ENCODE measurements at regions of chr12 and their contacts with region 1.

Region 1: GRCh38 chr12:86484473-86484872 is 228.3 kb upstream of the MGAT4C start:
- DNase-seq: no peak
- H3K4me3 Mint-ChIP-seq: no peak overlapping the region
- H3K27ac Mint-ChIP-seq: no peak overlapping the region
- H3K4me1 Mint-ChIP-seq: no peaks in the 10 kb centered on the region
- H3K27me3 Mint-ChIP-seq: no peaks in the 10 kb centered on the region
- CTCF ChIP-seq: no peak

Region 2: GRCh38 chr12:85781766-85782165 is 702.7 kb before region 1 on chr12:
- CTCF ChIA-PET with region 1: no interaction called
- POLR2A ChIA-PET with region 1: no interaction called
- intact Hi-C with region 1: no loop called
- DNase-seq: no peak
- H3K4me3 Mint-ChIP-seq: no peak overlapping the region
- H3K27ac Mint-ChIP-seq: no peak overlapping the region
- H3K4me1 Mint-ChIP-seq: peaks cover 13% of the 10 kb centered on the region
- H3K27me3 Mint-ChIP-seq: no peaks in the 10 kb centered on the region
- CTCF ChIP-seq: no peak

Region 3: DNA sequence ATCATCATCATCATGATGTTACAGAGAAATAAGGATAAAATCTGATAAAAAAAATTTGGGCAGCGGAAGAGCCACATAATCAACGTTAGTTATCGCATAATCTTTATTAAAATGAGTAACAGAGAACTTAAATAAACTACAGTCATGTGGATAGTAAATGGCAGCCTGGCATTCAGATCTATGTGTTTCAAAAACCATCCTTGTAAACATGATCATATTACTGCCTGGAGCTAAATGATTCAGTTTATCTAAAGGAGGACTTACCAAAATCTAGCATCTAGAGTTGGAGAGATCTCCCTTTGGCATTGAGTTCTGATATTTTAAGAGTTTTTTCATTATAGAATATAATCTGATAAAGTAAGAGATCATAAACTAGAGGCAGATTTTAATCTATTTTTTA is 28.2 kb before region 1 on chr12:
- CTCF ChIA-PET with region 1: no interaction called
- POLR2A ChIA-PET with region 1: no interaction called
- intact Hi-C with region 1: no loop called
- DNase-seq: peak; percentile 8
- H3K4me3 Mint-ChIP-seq: no peak overlapping the region
- H3K27ac Mint-ChIP-seq: no peak overlapping the region
- H3K4me1 Mint-ChIP-seq: no peaks in the 10 kb centered on the region
- H3K27me3 Mint-ChIP-seq: no peaks in the 10 kb centered on the region
- CTCF ChIP-seq: no peak

Region 4: DNA sequence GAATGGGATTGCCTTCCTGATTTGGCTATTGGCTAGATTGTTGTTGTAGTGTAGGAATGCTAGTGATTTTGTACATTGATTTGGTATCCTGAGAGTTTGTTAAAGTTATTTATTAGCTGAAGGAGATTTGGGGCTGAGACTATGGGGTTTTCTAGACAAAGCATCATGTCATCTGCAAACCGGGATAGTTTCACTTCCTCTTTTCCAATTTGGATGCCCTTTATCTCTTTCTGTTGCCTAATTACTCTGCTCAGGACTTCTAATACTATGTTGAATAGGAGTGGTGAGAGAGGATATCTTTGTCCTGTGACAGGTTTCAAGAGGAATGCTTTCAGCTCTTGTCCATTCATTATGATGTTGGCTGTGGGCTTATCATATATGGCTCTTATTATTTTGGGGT is 37.4 kb after region 1 on chr12:
- CTCF ChIA-PET with region 1: no interaction called
- POLR2A ChIA-PET with region 1: no interaction called
- intact Hi-C with region 1: loop called (anchors 1 kb)
- DNase-seq: no peak
- H3K4me3 Mint-ChIP-seq: no peak overlapping the region
- H3K27ac Mint-ChIP-seq: no peak overlapping the region
- H3K4me1 Mint-ChIP-seq: no peaks in the 10 kb centered on the region
- H3K27me3 Mint-ChIP-seq: no peaks in the 10 kb centered on the region
- CTCF ChIP-seq: no peak